Caco-2 (cell line): ENCODE measurements at regions of chr13 and their contacts with region 1.

Region 1: GRCh38 chr13:75482070-75482819 is at the start of gene TBC1D4:
- DNase-seq: peak; percentile 95
- H3K4me3 ChIP-seq: peak within 1 kb of the TSS; percentile 94
- H3K4me3 Mint-ChIP-seq: peak within 1 kb of the TSS; percentile 82
- H3K27ac Mint-ChIP-seq: peak within 1 kb of the TSS; percentile 78
- H3K4me1 ChIP-seq: peaks cover 40% of the 10 kb centered on the region
- H3K4me1 Mint-ChIP-seq: peaks cover 24% of the 10 kb centered on the region
- H3K27me3 ChIP-seq: no peaks in the 10 kb centered on the region
- H3K27me3 Mint-ChIP-seq: no peaks in the 10 kb centered on the region
- CTCF ChIP-seq: peak; percentile 75 to 96
- total RNA-seq, gene TBC1D4: 177 and 194 TPM in 2 replicates

Region 2: GRCh38 chr13:75195495-75196146 is 286.6 kb before region 1 on chr13:
- CTCF ChIA-PET with region 1: no interaction called
- POLR2A ChIA-PET with region 1: no interaction called
- intact Hi-C with region 1: no loop called
- DNase-seq: no peak
- H3K4me3 ChIP-seq: no peak overlapping the region
- H3K4me3 Mint-ChIP-seq: no peak overlapping the region
- H3K27ac Mint-ChIP-seq: no peak overlapping the region
- H3K4me1 ChIP-seq: no peaks in the 10 kb centered on the region
- H3K4me1 Mint-ChIP-seq: no peaks in the 10 kb centered on the region
- H3K27me3 ChIP-seq: no peaks in the 10 kb centered on the region
- H3K27me3 Mint-ChIP-seq: peaks cover 27% of the 10 kb centered on the region
- CTCF ChIP-seq: no peak

Region 3: DNA sequence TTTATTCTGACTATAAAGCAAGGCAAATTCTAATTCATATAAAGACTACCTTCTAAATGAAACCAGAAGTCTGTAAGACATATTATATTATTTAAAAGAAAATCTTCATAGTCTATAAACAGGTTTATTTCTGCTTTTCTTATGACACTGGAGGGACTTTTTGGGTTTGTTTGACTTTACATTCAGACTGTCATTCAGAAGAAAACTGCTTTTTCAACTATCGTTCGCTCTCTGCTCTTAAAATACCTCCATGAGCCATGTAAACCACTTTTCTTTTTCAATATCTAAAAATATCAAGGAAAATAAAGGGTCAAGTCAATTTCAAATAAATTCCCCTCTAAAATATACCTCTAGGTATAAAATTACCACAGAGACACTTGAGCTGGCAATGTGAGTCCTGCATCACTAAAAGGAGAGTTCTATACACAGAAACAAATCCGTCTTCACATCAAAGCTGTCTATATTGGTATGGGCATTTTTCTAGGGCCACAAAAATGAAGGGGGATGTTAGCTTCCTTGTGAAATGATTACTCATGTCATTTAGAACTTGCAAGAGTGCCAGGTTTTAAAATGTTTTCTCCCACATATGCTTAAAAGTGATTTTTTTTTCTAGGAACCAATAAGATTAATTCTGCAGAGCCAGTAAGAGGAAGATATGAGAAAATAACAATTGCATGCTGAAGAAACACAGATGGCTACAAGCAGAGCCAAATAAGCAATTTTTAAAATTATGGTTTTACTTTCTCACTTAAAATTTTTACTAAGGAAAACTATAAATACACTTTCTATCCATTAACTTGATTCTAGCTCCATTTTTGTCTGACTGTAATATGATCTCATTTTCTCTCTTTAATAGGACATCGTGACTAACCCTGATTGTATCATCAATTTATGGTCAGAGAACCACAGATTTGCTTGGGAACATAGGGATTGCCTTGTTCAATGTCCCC is 182.1 kb before region 1 on chr13:
- CTCF ChIA-PET with region 1: interaction called, 3 read pairs
- POLR2A ChIA-PET with region 1: no interaction called
- intact Hi-C with region 1: loop called (anchors 2 kb)
- DNase-seq: no peak
- H3K4me3 ChIP-seq: no peak overlapping the region
- H3K4me3 Mint-ChIP-seq: peak overlapping the region; percentile 54
- H3K27ac Mint-ChIP-seq: peak overlapping the region; percentile 89
- H3K4me1 ChIP-seq: peaks cover 93% of the 10 kb centered on the region
- H3K4me1 Mint-ChIP-seq: peaks cover 60% of the 10 kb centered on the region
- H3K27me3 ChIP-seq: no peaks in the 10 kb centered on the region
- H3K27me3 Mint-ChIP-seq: no peaks in the 10 kb centered on the region
- CTCF ChIP-seq: no peak

Region 4: DNA sequence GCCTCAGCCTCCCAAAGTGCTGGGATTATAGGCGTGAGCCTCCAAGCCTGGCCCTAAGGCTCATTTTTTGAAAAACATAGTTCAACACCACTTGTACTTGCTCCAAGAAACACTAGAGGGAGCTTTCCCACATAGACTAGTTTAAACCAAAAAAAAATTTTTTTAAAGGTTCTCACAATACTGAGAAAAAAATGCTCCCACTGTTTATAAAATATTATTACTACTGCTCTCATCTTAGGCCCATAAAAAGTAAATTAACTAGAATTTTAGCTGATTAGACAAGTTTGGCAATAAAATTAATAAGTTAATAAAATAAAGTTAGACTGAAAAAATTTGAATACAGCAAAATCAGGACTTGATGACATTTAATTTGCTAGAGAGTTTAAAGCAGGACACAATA is 109.7 kb before region 1 on chr13:
- CTCF ChIA-PET with region 1: interaction called, 34 read pairs
- POLR2A ChIA-PET with region 1: no interaction called
- intact Hi-C with region 1: loop called (anchors 2 kb)
- DNase-seq: peak in 1 of 2 experiments; percentile 59
- H3K4me3 ChIP-seq: no peak overlapping the region
- H3K4me3 Mint-ChIP-seq: no peak overlapping the region
- H3K27ac Mint-ChIP-seq: no peak overlapping the region
- H3K4me1 ChIP-seq: peaks cover 74% of the 10 kb centered on the region
- H3K4me1 Mint-ChIP-seq: peaks cover 46% of the 10 kb centered on the region
- H3K27me3 ChIP-seq: no peaks in the 10 kb centered on the region; the same call in 1 of the 2 replicates
- H3K27me3 Mint-ChIP-seq: no peaks in the 10 kb centered on the region
- CTCF ChIP-seq: peak; percentile 71 to 73

Region 5: DNA sequence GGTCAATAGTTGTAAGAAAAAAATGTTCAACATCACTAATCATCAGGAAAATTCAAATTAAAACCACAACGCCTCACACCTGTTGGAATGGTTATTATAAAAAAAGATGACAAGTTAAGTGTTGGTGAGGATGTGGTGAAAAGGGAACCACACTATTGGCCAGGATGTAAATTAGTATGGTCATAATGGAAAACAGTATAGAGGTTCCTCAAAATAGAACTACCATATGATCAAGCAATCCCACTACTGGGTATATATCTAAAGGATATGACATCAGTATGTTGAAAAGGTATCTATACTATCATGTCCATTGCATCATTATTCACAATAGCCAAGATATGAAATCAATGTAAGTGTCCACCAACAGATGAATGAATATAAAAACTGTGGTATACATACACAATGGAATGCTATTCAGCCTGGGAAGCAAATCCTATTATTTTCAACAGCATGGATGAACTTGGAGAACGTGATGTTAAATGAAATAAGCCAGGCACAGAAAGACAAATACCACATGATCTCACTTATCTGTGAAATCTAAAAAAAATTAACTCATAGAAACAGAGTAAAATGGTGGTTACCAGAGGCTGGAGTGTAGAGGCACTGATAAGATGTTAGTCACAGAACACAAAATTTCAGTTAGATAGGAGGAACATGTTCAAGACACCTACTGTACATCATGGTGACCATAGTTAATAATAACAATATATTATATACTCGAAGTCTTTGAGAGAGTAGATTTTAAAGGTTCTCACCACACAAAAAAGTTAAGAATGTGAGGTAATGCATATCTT is 56.8 kb before region 1 on chr13:
- CTCF ChIA-PET with region 1: no interaction called
- POLR2A ChIA-PET with region 1: no interaction called
- intact Hi-C with region 1: no loop called
- DNase-seq: no peak
- H3K4me3 ChIP-seq: no peak overlapping the region
- H3K4me3 Mint-ChIP-seq: no peak overlapping the region
- H3K27ac Mint-ChIP-seq: no peak overlapping the region
- H3K4me1 ChIP-seq: peaks cover 14% of the 10 kb centered on the region
- H3K4me1 Mint-ChIP-seq: peaks cover 18% of the 10 kb centered on the region
- H3K27me3 ChIP-seq: no peaks in the 10 kb centered on the region
- H3K27me3 Mint-ChIP-seq: no peaks in the 10 kb centered on the region
- CTCF ChIP-seq: no peak

Region 6: GRCh38 chr13:75537401-75538365 is 55.4 kb after region 1 on chr13 and contains the start of gene COMMD6:
- CTCF ChIA-PET with region 1: interaction called, 14 read pairs
- POLR2A ChIA-PET with region 1: no interaction called
- intact Hi-C with region 1: loop called (anchors 2 kb)
- DNase-seq: peak; percentile 90 to 91
- H3K4me3 ChIP-seq: peak within 1 kb of the TSS; percentile 87
- H3K4me3 Mint-ChIP-seq: peak within 1 kb of the TSS; percentile 92
- H3K27ac Mint-ChIP-seq: peak within 1 kb of the TSS; percentile 87
- H3K4me1 ChIP-seq: 0 out of 2 replicates have a peak, but pooled peaks cover 7% of the 10 kb centered on the region
- H3K4me1 Mint-ChIP-seq: peaks cover 14% of the 10 kb centered on the region
- H3K27me3 ChIP-seq: no peaks in the 10 kb centered on the region
- H3K27me3 Mint-ChIP-seq: no peaks in the 10 kb centered on the region
- CTCF ChIP-seq: peak; percentile 30 to 80
- total RNA-seq, gene COMMD6: 101 and 104 TPM in 2 replicates

Region 7: GRCh38 chr13:75635828-75636435 is 153.7 kb after region 1 on chr13 and contains the start of gene LMO7:
- CTCF ChIA-PET with region 1: no interaction called
- POLR2A ChIA-PET with region 1: no interaction called
- intact Hi-C with region 1: loop called (anchors 5 kb)
- DNase-seq: peak; percentile 84 to 88
- H3K4me3 ChIP-seq: peak within 1 kb of the TSS; percentile 57
- H3K4me3 Mint-ChIP-seq: peak within 1 kb of the TSS; percentile 78
- H3K27ac Mint-ChIP-seq: peak within 1 kb of the TSS; percentile 42
- H3K4me1 ChIP-seq: peaks cover 8% of the 10 kb centered on the region; the same call in 1 of the 2 replicates
- H3K4me1 Mint-ChIP-seq: peaks cover 16% of the 10 kb centered on the region
- H3K27me3 ChIP-seq: no peaks in the 10 kb centered on the region
- H3K27me3 Mint-ChIP-seq: no peaks in the 10 kb centered on the region
- CTCF ChIP-seq: no peak
- total RNA-seq, gene LMO7: 209 and 230 TPM in 2 replicates